ENCODE measurements at regions of chr1 and their contacts with region 1.

Region 1: DNA sequence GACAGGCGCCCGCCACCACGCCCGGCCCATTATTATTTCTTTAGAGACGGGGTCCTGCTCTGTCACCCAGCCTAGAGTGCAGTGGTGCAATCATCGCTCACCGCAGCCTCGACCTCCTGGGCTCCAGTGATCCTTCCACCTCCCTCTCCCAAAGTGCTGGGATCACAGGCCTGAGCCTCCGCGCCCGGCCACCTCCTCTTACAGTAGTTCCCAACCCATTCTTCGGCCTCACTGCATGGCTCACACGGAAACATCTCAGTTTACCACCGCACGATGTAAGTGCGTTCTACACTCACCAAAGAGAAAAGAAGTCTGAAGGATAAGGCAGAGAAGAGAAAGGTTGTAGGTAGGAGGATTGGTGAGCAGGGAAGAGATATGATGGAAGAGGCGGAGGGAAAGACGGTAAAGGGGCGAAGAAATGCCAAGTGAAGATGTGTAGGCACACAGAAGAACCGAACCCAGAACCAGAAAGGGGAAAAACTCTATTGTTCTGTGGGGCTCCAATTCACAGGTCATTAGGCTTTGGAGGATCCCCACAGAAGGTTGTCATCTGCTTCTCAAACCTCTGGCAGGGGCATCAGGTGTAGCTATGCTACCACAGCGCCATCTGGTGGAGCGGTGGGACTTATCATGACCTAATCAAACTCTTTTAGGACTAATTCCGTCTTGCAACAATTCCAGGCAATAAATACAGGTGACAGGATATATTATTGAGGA is 504.2 kb downstream of the SMYD3 start:
- DNase-seq: peak; percentile 89
- ATAC-seq: peak; percentile 84 to 85
- H3K4me3 ChIP-seq: no peak overlapping the region
- H3K27ac ChIP-seq: no peak overlapping the region
- H3K4me1 ChIP-seq: no peaks in the 10 kb centered on the region
- H3K27me3 ChIP-seq: no peaks in the 10 kb centered on the region
- CTCF ChIP-seq: peak; percentile 87

Region 2: GRCh38 chr1:245156081-245156735 is 846.7 kb before region 1 on chr1:
- intact Hi-C with region 1: loop called (anchors 10 kb)
- DNase-seq: peak; percentile 90
- ATAC-seq: peak; percentile 95
- H3K4me3 ChIP-seq: peak overlapping the region; percentile 63
- H3K27ac ChIP-seq: no peak overlapping the region
- H3K4me1 ChIP-seq: peaks cover 39% of the 10 kb centered on the region
- H3K27me3 ChIP-seq: peaks cover 41% of the 10 kb centered on the region
- CTCF ChIP-seq: peak; percentile 73

Region 3: DNA sequence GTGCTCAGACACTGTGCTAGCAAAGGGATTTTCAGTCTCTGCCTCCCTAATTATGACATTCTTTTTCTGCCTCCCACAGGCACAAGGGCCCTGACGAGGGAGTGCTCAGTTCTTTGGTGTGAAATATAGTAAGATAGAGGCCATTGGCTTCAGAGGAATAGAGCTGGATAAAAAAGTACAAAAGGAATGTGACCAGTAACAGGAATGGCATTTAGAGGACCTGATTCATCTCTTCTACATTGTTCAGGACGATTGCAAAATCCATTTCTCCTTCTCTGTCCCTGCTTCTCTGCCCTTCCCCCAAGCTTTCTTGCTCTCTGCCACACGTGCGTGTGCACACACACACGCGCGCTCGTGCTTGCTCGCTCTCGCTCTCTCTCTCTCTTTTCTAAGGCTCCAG is 179.9 kb before region 1 on chr1:
- intact Hi-C with region 1: no loop called
- DNase-seq: no peak
- ATAC-seq: peak; percentile 66 to 70
- H3K4me3 ChIP-seq: no peak overlapping the region
- H3K27ac ChIP-seq: no peak overlapping the region
- H3K4me1 ChIP-seq: no peaks in the 10 kb centered on the region
- H3K27me3 ChIP-seq: no peaks in the 10 kb centered on the region
- CTCF ChIP-seq: no peak

Region 4: GRCh38 chr1:246413430-246413829 is 410.5 kb after region 1 on chr1:
- intact Hi-C with region 1: no loop called
- DNase-seq: no peak
- ATAC-seq: no peak
- H3K4me3 ChIP-seq: no peak overlapping the region
- H3K27ac ChIP-seq: no peak overlapping the region
- H3K4me1 ChIP-seq: no peaks in the 10 kb centered on the region
- H3K27me3 ChIP-seq: no peaks in the 10 kb centered on the region
- CTCF ChIP-seq: no peak

Region 5: DNA sequence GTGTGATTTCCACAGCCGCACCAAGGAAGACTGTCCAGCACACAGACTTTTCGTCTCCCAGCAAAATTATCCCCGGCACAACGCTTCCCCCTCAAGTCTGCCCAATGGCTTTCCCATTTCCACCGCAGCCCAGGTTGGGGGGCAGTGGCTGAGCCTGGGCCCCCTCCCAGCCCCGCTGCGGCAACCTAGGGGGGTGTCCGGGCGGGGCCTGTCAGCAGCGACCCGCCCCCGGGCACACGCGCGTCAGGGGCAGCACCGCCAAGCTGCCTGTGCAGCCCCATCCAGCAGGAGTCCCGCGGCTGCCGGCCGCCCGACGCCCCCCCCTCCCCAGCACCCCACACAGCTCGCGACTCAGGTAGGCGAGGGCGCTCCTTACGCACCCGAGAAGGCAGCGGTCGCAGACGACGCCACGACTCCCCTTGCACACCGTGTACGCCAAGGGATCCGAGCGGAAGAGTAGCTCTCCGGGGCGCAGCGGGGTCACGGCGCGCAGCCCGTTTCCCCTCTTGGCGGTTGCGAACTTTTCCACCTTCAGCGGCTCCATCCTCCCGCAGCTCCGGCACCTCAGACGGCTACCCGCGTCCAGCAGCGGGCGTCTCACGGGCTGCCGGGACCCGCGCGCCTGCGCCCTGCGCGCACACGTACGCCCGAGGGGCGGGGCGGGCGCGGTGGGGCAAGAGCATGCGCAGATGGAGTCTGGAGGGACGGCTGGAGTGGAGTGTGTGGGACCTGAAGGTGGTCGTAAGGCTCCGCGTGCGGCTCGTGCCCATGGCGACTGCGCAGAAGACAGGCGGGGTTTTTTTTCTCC is 504.0 kb after region 1 on chr1 and contains the start of gene SMYD3:
- intact Hi-C with region 1: no loop called
- DNase-seq: peak; percentile 86
- ATAC-seq: peak; percentile 97 to 99
- H3K4me3 ChIP-seq: peak within 1 kb of the TSS; percentile 89
- H3K27ac ChIP-seq: peak within 1 kb of the TSS; percentile 71
- H3K4me1 ChIP-seq: peaks cover 7% of the 10 kb centered on the region
- H3K27me3 ChIP-seq: no peaks in the 10 kb centered on the region
- CTCF ChIP-seq: no peak
- total RNA-seq, gene SMYD3: 20.5 TPM

Measured in lower lobe of right lung (tissue), 2 donors.